ENCODE measurements at regions of chr10 and their contacts with region 1.

Region 1: DNA sequence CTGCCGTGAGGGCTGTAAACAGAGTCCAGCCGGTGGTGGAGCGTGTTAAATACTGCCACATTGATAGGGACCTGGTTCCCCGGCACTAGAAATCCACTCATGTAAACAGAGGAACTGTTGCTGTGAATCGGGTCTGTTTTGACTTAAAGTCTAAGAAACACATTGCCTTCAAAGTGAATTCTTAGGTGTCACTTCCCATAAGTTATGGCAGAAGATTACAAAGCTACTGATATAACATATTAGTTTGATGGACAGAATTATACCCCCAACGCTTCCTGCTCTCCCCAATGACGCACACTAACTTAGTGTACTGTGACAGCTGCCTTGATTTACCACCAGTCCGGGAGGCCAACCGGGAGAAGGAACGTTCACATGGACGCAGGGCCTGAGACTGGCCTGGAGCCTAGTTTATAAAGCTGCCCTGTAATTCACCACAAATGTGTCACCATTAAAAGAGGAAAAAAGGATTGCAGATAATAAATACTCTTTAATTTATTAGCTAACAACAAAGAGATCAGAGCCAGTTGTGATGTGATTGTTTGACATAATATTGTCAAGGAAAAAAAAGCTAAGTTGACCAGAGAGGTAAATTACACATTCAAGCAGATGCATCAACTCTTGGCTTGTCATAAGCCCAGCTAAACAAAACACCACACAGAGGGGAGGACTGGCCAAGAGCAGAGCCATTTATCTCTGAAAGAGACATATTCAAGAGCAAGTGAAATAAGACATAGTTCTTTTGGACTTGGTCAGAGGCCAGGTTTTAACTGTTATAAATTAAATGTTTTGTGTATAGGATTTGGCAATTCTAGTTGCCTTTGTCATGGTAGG is 820.6 kb downstream of the LRMDA start:
- DNase-seq: peak; percentile 83 to 97 (median 90)
- H3K4me3 ChIP-seq: no peak overlapping the region
- H3K27ac ChIP-seq: peak overlapping the region; percentile 23 to 85
- H3K4me1 ChIP-seq: peaks cover 21% of the 10 kb centered on the region
- H3K27me3 ChIP-seq: no peaks in the 10 kb centered on the region
- CTCF ChIP-seq: no peak
- EP300 ChIP-seq: peak; percentile 53
- POLR2A ChIP-seq: no peak

Region 2: GRCh38 chr10:76558586-76558985 is 306.5 kb after region 1 on chr10:
- intact Hi-C with region 1: loop called in 1 of 4 experiments (anchors 10 kb)
- DNase-seq: peak in 3 of 5 donors; percentile 45 to 73 (median 62)
- H3K4me3 ChIP-seq: no peak overlapping the region
- H3K27ac ChIP-seq: peak overlapping the region in 1 of 2 donors; percentile 24
- H3K4me1 ChIP-seq: peaks cover 12% of the 10 kb centered on the region
- H3K27me3 ChIP-seq: no peaks in the 10 kb centered on the region
- CTCF ChIP-seq: no peak
- EP300 ChIP-seq: no peak
- POLR2A ChIP-seq: no peak

Region 3: DNA sequence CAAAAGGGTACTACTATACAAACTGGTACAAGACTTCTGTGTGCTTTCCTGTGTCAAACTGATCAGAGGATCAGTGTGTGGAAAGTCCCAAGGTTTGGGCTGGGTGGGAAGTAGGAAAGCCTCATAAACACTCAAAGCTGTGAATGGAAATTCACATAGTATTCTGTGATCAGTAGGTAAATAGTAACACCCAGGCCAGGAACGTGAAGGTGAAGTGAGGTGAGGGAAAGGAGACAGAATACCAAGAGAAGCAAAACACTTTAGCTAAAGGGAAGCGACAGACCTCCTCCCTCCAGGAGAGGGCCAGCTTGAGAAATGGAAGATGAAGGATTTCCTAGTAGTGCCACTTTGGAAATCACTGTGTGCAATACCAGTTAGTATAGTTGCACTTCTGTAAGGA is 933.6 kb after region 1 on chr10:
- intact Hi-C with region 1: no loop called
- DNase-seq: no peak
- H3K4me3 ChIP-seq: no peak overlapping the region
- H3K27ac ChIP-seq: no peak overlapping the region
- H3K4me1 ChIP-seq: no peaks in the 10 kb centered on the region
- H3K27me3 ChIP-seq: no peaks in the 10 kb centered on the region
- CTCF ChIP-seq: no peak
- EP300 ChIP-seq: no peak
- POLR2A ChIP-seq: no peak

Measured in ovary (tissue), 10 donors.